ENCODE measurements at regions of chr10 and their contacts with region 1.

Region 1: GRCh38 chr10:32346134-32346550 is 816 bp downstream of the EPC1 start:
- DNase-seq: peak; percentile 98
- H3K4me3 ChIP-seq: peak overlapping the region; percentile 84 to 95 (median 90)
- H3K27ac ChIP-seq: peak overlapping the region; percentile 99 to 100 (median 100)
- H3K4me1 ChIP-seq: peaks cover 0 to 73% (median 67%) of the 10 kb centered on the region in 4 donors
- H3K27me3 ChIP-seq: no peaks in the 10 kb centered on the region
- CTCF ChIP-seq: peak; percentile 84 to 96 (median 94)
- EP300 ChIP-seq: no peak
- POLR2A ChIP-seq: peak in 1 of 2 donors; percentile 11

Region 2: DNA sequence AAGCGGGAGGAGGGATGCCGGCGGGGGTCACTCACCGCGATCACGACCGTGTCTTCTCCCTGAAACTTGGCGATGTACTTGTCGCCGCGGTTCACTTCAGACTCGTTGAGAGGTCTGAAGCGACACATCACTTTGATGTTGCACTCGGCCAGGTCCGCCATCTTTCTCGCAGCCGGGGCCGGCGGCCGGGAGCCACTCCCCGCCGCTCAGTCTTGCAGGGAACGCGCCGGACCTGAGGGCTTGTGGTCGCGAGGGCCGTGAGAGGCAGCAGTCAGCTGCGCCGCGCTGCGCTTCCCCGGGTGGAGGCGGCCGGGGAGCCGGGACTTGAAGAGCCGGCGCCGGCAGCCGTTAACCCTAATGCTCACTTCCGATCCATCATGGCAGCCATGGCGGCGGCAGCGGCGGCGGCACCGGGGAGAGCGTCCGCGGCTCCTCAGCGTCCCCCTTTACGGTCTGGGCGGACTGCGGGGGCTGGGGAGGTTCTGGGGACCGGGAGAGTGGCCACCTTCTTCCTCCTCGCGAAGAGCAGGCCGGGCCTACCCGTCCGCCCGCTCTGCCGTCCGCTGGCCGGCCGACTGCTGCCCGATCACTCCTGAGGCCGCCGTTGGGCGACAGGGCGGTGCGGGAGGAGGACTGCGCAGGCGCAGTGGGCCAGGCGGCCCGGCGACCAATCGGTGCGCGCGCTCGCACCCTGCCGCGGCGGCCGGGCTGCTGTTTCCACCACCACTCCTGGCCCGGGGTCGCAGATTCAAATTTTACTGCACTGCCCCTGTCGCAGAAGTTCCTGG is 290.1 kb before region 1 on chr10 and contains the start of gene KIF5B:
- intact Hi-C with region 1: loop called (anchors 10 kb)
- DNase-seq: peak; percentile 94
- H3K4me3 ChIP-seq: peak within 1 kb of the TSS; percentile 77 to 99 (median 92)
- H3K27ac ChIP-seq: peak within 1 kb of the TSS; percentile 93 to 100 (median 96)
- H3K4me1 ChIP-seq: peaks cover 0 to 41% (median 16%) of the 10 kb centered on the region in 4 donors
- H3K27me3 ChIP-seq: no peaks in the 10 kb centered on the region
- CTCF ChIP-seq: no peak
- EP300 ChIP-seq: no peak
- POLR2A ChIP-seq: peak; percentile 97 to 98
- total RNA-seq, gene KIF5B: 199 to 270 (median 240) TPM

Region 3: GRCh38 chr10:32190890-32191491 is 155.2 kb before region 1 on chr10:
- intact Hi-C with region 1: loop called (anchors 5 kb)
- DNase-seq: no peak
- H3K4me3 ChIP-seq: no peak overlapping the region
- H3K27ac ChIP-seq: no peak overlapping the region
- H3K4me1 ChIP-seq: peaks cover 0 to 5% (median 2%) of the 10 kb centered on the region in 4 donors
- H3K27me3 ChIP-seq: no peaks in the 10 kb centered on the region
- CTCF ChIP-seq: peak; percentile 31 to 77 (median 58)
- EP300 ChIP-seq: no peak
- POLR2A ChIP-seq: no peak

Region 4: DNA sequence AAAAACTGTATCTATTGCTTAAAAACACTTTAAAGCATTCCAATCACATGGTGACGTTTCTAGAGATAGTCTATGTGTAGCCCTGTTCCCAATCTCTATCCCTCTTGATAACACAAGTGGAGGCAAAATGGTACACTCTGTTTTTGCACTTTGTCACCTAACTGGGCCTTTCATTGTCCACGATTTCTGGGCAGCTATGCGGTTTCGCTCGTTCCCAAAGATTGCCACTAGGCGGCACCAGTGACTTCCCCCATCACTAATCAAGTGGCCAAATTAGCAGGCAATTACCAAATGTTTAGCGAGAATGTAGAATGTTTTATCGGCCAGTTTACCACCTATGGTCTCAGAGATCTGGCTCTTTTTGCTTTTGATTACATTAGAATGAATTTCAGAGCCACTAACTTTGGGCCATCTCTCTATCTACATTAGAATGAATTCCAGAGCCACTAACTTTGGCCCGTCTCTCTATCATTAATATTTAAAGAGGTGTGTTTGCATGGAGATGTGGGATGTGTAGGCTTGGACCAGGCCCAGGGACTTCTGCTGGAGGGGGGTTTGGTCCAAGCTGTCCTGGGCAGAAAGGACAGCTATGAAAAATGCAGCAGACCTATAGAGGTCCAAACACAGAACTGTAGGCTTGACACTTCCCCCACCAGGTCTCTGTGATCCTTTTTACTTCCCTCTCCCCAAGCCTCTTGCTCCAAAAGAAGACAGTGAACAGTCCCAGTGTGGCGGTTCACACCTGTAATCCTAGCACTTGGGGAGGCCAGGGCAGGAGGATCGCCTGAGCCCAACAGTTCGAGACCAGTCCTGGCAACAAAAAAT is 89.3 kb before region 1 on chr10:
- intact Hi-C with region 1: loop called (anchors 2 kb)
- DNase-seq: peak; percentile 74
- H3K4me3 ChIP-seq: no peak overlapping the region
- H3K27ac ChIP-seq: no peak overlapping the region
- H3K4me1 ChIP-seq: peaks cover 0 to 5% (median 2%) of the 10 kb centered on the region in 4 donors
- H3K27me3 ChIP-seq: no peaks in the 10 kb centered on the region
- CTCF ChIP-seq: peak; percentile 55 to 90 (median 84)
- EP300 ChIP-seq: no peak
- POLR2A ChIP-seq: no peak

Region 5: GRCh38 chr10:32367793-32368453 is 21.8 kb after region 1 on chr10:
- intact Hi-C with region 1: loop called (anchors 2 kb)
- DNase-seq: peak; percentile 83
- H3K4me3 ChIP-seq: peak overlapping the region in 1 of 4 donors; percentile 15
- H3K27ac ChIP-seq: peak overlapping the region; percentile 6 to 62 (median 37)
- H3K4me1 ChIP-seq: peaks cover 0 to 59% (median 48%) of the 10 kb centered on the region in 4 donors
- H3K27me3 ChIP-seq: no peaks in the 10 kb centered on the region
- CTCF ChIP-seq: peak; percentile 18 to 79 (median 70)
- EP300 ChIP-seq: no peak
- POLR2A ChIP-seq: no peak

Region 6: DNA sequence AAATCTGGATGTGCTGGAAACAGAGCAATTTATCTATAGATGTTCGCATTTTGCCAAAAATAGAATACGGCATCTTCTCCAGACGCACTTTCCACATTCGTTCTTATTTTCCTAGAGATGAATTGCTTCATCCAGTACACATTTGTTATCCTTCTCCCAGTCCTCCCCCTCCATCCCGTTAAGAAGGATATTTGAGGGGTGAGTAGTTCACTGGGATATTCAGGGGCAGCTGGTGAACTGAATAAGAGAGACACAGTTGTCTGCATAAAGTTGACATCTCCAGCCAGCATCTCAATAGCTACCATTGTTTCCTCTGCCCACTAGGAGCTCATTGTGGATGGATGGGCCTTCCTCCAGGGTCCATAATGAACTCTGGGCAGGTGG is 1445.1 kb after region 1 on chr10:
- intact Hi-C with region 1: no loop called
- DNase-seq: no peak
- H3K4me3 ChIP-seq: no peak overlapping the region
- H3K27ac ChIP-seq: no peak overlapping the region
- H3K4me1 ChIP-seq: no peaks in the 10 kb centered on the region
- H3K27me3 ChIP-seq: no peaks in the 10 kb centered on the region
- CTCF ChIP-seq: no peak
- EP300 ChIP-seq: no peak
- POLR2A ChIP-seq: no peak

Measured in sigmoid colon (tissue), 7 donors.